SK-N-SH (cell line): ENCODE measurements at regions of chr17 and their contacts with region 1.

Region 1: GRCh38 chr17:57892146-57892828 is 42.4 kb upstream of the MRPS23 start:
- DNase-seq: peak; percentile 92
- H3K4me3 ChIP-seq: peak overlapping the region in 1 of 2 experiments; percentile 21; a peak in 1 of 4 replicates
- H3K27ac ChIP-seq: peak overlapping the region; percentile 44 to 96
- H3K4me1 ChIP-seq: peaks cover 32 to 60% of the 10 kb centered on the region in 2 experiments
- H3K27me3 ChIP-seq: no peaks in the 10 kb centered on the region
- CTCF ChIP-seq: peak; percentile 100
- EP300 ChIP-seq: no peak
- RAD21 ChIP-seq: peak; percentile 91

Region 2: GRCh38 chr17:57868007-57868909 is 24.0 kb before region 1 on chr17:
- CTCF ChIA-PET with region 1: interaction called, 125 read pairs
- POLR2A ChIA-PET with region 1: no interaction called
- DNase-seq: peak; percentile 84
- H3K4me3 ChIP-seq: no peak overlapping the region
- H3K27ac ChIP-seq: peak overlapping the region; percentile 86 to 96
- H3K4me1 ChIP-seq: peaks cover 25 to 45% of the 10 kb centered on the region in 2 experiments; a peak in 3 of 4 replicates
- H3K27me3 ChIP-seq: no peaks in the 10 kb centered on the region
- CTCF ChIP-seq: peak; percentile 70
- EP300 ChIP-seq: peak; percentile 62 to 98
- RAD21 ChIP-seq: peak; percentile 40

Region 3: GRCh38 chr17:57909548-57909947 is 17.3 kb after region 1 on chr17:
- CTCF ChIA-PET with region 1: interaction called, 56 read pairs
- POLR2A ChIA-PET with region 1: no interaction called
- DNase-seq: no peak
- H3K4me3 ChIP-seq: no peak overlapping the region
- H3K27ac ChIP-seq: no peak overlapping the region
- H3K4me1 ChIP-seq: peaks cover 5 to 24% of the 10 kb centered on the region in 2 experiments; a peak in 1 of 4 replicates
- H3K27me3 ChIP-seq: no peaks in the 10 kb centered on the region
- CTCF ChIP-seq: no peak
- EP300 ChIP-seq: no peak
- RAD21 ChIP-seq: no peak

Region 4: GRCh38 chr17:57939797-57940196 is 47.5 kb after region 1 on chr17:
- CTCF ChIA-PET with region 1: interaction called, 14 read pairs
- POLR2A ChIA-PET with region 1: no interaction called
- DNase-seq: no peak
- H3K4me3 ChIP-seq: no peak overlapping the region
- H3K27ac ChIP-seq: no peak overlapping the region
- H3K4me1 ChIP-seq: peaks cover 43 to 48% of the 10 kb centered on the region in 2 experiments; a peak in 3 of 4 replicates
- H3K27me3 ChIP-seq: no peaks in the 10 kb centered on the region
- CTCF ChIP-seq: no peak
- EP300 ChIP-seq: no peak
- RAD21 ChIP-seq: no peak

Region 5: GRCh38 chr17:57982452-57983170 is 90.3 kb after region 1 on chr17:
- CTCF ChIA-PET with region 1: interaction called, 15 read pairs
- POLR2A ChIA-PET with region 1: no interaction called
- DNase-seq: no peak
- H3K4me3 ChIP-seq: no peak overlapping the region
- H3K27ac ChIP-seq: no peak overlapping the region
- H3K4me1 ChIP-seq: peaks cover 17 to 43% of the 10 kb centered on the region in 2 experiments
- H3K27me3 ChIP-seq: no peaks in the 10 kb centered on the region
- CTCF ChIP-seq: no peak
- EP300 ChIP-seq: no peak
- RAD21 ChIP-seq: no peak